ENCODE measurements at regions of chr1 and their contacts with region 1.

Region 1: DNA sequence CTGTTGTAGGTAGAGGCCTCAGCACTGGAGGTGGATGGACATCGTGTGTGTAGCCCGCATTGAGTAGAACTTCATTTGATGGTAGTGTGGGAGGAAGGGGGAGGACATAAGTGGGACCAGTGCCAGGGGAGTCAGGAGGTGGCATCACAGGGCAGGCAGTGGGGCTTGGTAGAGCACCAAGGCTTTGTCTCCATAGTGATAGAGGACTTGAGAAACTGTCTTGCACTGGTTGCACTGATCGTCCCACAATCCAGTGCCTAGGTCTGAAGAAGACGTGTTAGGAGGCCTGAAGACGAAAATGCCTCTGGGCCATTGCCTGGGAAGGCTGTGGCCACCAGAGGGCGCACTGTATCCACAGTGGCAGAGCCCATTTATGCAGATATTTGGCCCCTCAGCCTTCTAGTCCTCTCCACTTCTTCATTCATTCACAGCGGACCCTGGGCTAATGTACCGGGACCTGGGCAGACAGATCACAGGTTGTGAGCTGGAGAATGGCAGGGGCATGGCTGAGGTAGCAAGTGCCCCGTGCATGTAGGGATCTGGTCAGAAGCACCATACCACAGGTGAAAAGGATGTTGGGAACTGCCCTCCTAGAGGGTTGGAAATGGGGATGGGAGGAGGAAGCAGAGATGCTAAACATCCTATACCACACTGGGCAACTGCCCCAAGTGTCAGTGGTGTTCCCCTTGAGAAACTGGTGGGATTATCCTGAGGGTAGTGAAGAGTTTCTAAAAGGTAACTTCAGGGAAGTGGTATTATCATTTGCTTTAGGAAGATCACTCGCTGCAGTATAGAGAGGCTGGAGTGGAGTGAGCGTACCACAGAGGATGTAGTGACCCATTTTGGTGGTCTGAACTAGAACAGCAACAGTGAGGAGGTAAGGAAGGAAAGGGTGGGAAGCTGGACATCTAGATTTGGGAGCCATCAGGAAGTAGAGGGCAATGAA is 95.3 kb downstream of the PIK3R3 start:
- DNase-seq: peak; percentile 95
- H3K4me3 ChIP-seq: no peak overlapping the region
- H3K27ac ChIP-seq: no peak overlapping the region
- H3K4me1 ChIP-seq: peaks cover 8 to 54% (median 33%) of the 10 kb centered on the region in 6 donors
- H3K27me3 ChIP-seq: no peaks in the 10 kb centered on the region
- CTCF ChIP-seq: peak; percentile 96 to 99 (median 98)
- POLR2A ChIP-seq: no peak

Region 2: DNA sequence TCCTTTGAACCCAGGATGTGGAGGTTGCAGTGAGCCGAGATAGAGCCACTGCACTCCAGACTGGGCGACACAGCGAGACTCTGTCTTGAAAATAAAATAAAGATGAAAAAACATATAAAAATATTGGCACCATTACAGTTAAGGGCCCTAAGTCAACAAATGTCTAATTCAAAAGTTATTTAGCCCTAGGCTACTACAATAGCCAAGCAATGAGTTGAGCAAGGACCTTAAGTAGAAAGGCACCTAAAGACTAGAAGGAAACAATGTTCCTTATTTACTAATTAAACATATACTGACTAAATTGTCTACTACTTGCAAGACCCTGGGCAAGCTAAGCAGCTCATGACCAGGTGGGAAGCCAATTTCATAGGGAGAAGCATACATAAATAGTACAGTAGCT is 91.2 kb after region 1 on chr1:
- intact Hi-C with region 1: loop called (anchors 5 kb)
- DNase-seq: no peak
- H3K4me3 ChIP-seq: peak overlapping the region in 2 of 8 donors; percentile 61 to 79
- H3K27ac ChIP-seq: no peak overlapping the region
- H3K4me1 ChIP-seq: peaks cover under 1 to 38% (median 19%) of the 10 kb centered on the region in 6 donors
- H3K27me3 ChIP-seq: peaks cover 0 to 41% (median 0%) of the 10 kb centered on the region in 7 donors
- CTCF ChIP-seq: no peak
- POLR2A ChIP-seq: no peak

Region 3: DNA sequence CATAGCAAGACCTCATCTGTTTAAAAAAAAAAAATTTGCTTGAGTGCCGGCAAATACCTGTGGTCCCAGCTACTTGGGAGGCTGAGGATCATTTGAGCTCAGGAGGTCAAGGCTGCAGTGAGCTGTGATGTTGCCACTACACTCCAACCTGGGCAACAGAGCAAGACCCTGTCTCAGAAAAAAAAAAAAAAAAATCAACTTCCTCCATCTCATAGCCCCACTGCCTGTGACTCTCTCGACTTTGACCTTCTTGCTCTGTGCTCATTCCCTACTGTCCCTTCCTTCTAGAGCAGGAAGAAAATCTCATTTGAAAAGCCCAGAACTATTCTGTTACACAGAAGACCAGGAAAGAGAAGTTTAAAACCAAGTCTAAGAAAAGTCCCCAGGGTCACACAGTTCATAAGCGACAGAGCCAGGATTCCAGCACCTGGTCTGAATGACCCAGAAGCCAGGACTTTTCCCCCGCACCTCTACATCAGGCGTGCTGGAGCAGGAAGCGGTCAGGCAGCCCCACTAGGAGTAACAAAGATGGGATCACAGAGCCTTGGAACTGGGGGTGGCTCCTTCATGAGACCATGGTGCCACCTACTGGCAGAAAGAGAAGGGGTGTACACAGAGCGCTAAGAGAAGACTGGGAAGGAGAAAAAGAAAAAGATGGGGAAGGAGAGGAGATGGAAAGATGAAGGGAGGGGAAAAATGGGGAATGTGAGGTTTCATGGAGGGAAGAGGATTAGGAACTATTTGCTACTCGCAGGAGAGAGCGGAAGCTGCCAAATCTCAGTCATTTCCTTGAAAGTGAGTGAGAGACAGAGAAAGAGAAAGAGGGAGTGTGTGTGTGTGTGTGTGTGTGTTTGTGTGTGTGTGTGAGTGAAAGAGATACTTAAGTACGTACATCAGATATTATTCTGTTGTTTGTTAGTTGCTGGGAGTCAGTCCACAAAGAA is 142.2 kb after region 1 on chr1:
- intact Hi-C with region 1: loop called (anchors 2 kb)
- DNase-seq: no peak
- H3K4me3 ChIP-seq: no peak overlapping the region
- H3K27ac ChIP-seq: no peak overlapping the region
- H3K4me1 ChIP-seq: peaks cover 12 to 67% (median 41%) of the 10 kb centered on the region in 6 donors
- H3K27me3 ChIP-seq: peaks cover 0 to 5% (median 0%) of the 10 kb centered on the region in 7 donors
- CTCF ChIP-seq: peak; percentile 81 to 99 (median 89)
- POLR2A ChIP-seq: no peak

Region 4: GRCh38 chr1:46223472-46223943 is 186.3 kb after region 1 on chr1:
- intact Hi-C with region 1: loop called (anchors 5 kb)
- DNase-seq: peak; percentile 83
- H3K4me3 ChIP-seq: no peak overlapping the region
- H3K27ac ChIP-seq: no peak overlapping the region
- H3K4me1 ChIP-seq: peaks cover 0 to 9% (median 7%) of the 10 kb centered on the region in 6 donors
- H3K27me3 ChIP-seq: no peaks in the 10 kb centered on the region
- CTCF ChIP-seq: peak; percentile 67 to 93 (median 89)
- POLR2A ChIP-seq: no peak